ENCODE measurements at regions of chr18 and their contacts with region 1.

Region 1: GRCh38 chr18:70333757-70334156 is 44.9 kb downstream of the SOCS6 start:
- DNase-seq: no peak
- H3K4me3 ChIP-seq: no peak overlapping the region
- H3K27ac ChIP-seq: no peak overlapping the region
- H3K27me3 ChIP-seq: no peaks in the 10 kb centered on the region
- CTCF ChIP-seq: no peak

Region 2: GRCh38 chr18:70373042-70373519 is 39.3 kb after region 1 on chr18:
- intact Hi-C with region 1: loop called in 1 of 2 experiments (anchors 5 kb)
- DNase-seq: no peak
- H3K4me3 ChIP-seq: no peak overlapping the region
- H3K27ac ChIP-seq: peak overlapping the region in 6 of 59 donors; percentile 2 to 20 (median 9)
- H3K27me3 ChIP-seq: no peaks in the 10 kb centered on the region
- CTCF ChIP-seq: no peak

Region 3: GRCh38 chr18:70382992-70383717 is 49.4 kb after region 1 on chr18:
- intact Hi-C with region 1: no loop called
- DNase-seq: no peak
- H3K4me3 ChIP-seq: no peak overlapping the region
- H3K27ac ChIP-seq: peak overlapping the region in 57 of 59 donors; percentile 18 to 99 (median 94)
- H3K27me3 ChIP-seq: no peaks in the 10 kb centered on the region
- CTCF ChIP-seq: no peak